PC-3 (cell line): ENCODE measurements at regions of chr2 and their contacts with region 1.

Region 1: DNA sequence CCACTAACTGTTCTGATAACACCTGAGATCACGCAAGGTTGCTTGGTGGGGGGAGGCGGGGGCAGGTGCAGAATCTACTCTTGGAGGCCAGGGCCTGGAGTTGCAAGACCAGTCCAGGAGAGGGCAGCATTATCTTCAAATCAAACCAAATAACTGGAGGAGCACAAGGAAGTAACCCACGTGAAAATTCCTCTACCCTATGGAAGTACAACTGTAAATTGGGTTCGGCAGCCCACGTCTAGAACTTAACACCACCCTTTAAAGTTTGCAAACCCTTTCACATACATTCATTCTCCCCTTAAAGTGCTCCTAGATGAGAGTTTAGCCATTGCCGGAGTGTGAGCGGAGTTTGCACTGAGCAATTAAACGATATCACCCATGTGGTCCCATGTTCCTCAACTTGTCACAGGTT is 19.6 kb upstream of the CXCR1 start:
- DNase-seq: peak; percentile 81
- ATAC-seq: peak; percentile 97
- H3K4me3 ChIP-seq: no peak overlapping the region; the same call in 1 of the 2 replicates
- H3K27ac ChIP-seq: no peak overlapping the region
- H3K4me1 ChIP-seq: 0 out of 2 replicates have a peak, but pooled peaks cover 4% of the 10 kb centered on the region
- H3K27me3 ChIP-seq: peaks cover 8% of the 10 kb centered on the region
- CTCF ChIP-seq: peak; percentile 87

Region 2: GRCh38 chr2:218216674-218217359 is 30.5 kb after region 1 on chr2 and contains the start of gene ARPC2:
- CTCF ChIA-PET with region 1: no interaction called
- POLR2A ChIA-PET with region 1: no interaction called
- intact Hi-C with region 1: loop called (anchors 1 kb)
- DNase-seq: peak; percentile 95
- ATAC-seq: peak; percentile 81
- H3K4me3 ChIP-seq: peak within 1 kb of the TSS; percentile 100
- H3K27ac ChIP-seq: peak within 1 kb of the TSS; percentile 43
- H3K4me1 ChIP-seq: peaks cover 26% of the 10 kb centered on the region
- H3K27me3 ChIP-seq: no peaks in the 10 kb centered on the region
- CTCF ChIP-seq: no peak
- total RNA-seq, gene ARPC2: 210 and 213 TPM in 2 replicates

Region 3: DNA sequence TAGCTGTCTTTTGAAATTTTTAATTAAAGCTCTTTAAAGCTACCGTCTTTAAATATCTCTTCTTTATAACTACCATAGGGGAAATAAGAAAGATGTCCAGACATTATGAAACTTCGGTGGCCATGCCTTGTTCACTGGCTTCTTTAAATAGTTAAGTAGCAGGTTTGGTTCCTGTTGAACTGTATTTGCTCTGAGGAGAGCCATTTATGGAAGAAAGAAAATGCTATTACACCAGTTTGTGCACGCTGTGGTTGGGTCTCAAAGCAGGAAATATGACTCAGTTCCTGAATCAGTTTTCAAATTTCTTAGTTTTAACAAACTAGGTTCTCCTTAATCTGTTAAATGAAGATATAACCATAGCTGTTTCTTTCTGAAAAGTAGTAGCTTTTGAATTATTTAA is 42.9 kb after region 1 on chr2:
- CTCF ChIA-PET with region 1: no interaction called
- POLR2A ChIA-PET with region 1: no interaction called
- intact Hi-C with region 1: loop called (anchors 2 kb)
- DNase-seq: peak; percentile 84
- ATAC-seq: peak; percentile 97
- H3K4me3 ChIP-seq: peak overlapping the region; percentile 12; the same call in 1 of the 2 replicates
- H3K27ac ChIP-seq: peak overlapping the region; percentile 70
- H3K4me1 ChIP-seq: peaks cover 28% of the 10 kb centered on the region
- H3K27me3 ChIP-seq: no peaks in the 10 kb centered on the region
- CTCF ChIP-seq: no peak

Region 4: GRCh38 chr2:218257390-218257981 is 71.1 kb after region 1 on chr2:
- CTCF ChIA-PET with region 1: interaction called, 5 read pairs
- POLR2A ChIA-PET with region 1: no interaction called
- intact Hi-C with region 1: loop called (anchors 1 kb)
- DNase-seq: peak; percentile 45
- ATAC-seq: no peak
- H3K4me3 ChIP-seq: no peak overlapping the region
- H3K27ac ChIP-seq: no peak overlapping the region
- H3K4me1 ChIP-seq: no peaks in the 10 kb centered on the region
- H3K27me3 ChIP-seq: no peaks in the 10 kb centered on the region
- CTCF ChIP-seq: peak; percentile 69

Region 5: GRCh38 chr2:218269899-218270720 is 83.7 kb after region 1 on chr2 and contains the starts of genes AAMP and PNKD:
- CTCF ChIA-PET with region 1: no interaction called
- POLR2A ChIA-PET with region 1: no interaction called
- intact Hi-C with region 1: loop called (anchors 2 kb)
- DNase-seq: peak; percentile 99
- ATAC-seq: peak; percentile 87
- H3K4me3 ChIP-seq: peak within 1 kb of the TSS; percentile 90
- H3K27ac ChIP-seq: 0 out of 2 replicates have a peak within 1 kb of the TSS, but pooled peaks have one; percentile 2
- H3K4me1 ChIP-seq: peaks cover 19% of the 10 kb centered on the region
- H3K27me3 ChIP-seq: no peaks in the 10 kb centered on the region
- CTCF ChIP-seq: 0 out of 2 replicates have a peak, but pooled peaks have one; percentile 12
- total RNA-seq, gene AAMP: 272 and 312 TPM in 2 replicates
- total RNA-seq, gene PNKD: 95.5 and 97.7 TPM in 2 replicates

Region 6: DNA sequence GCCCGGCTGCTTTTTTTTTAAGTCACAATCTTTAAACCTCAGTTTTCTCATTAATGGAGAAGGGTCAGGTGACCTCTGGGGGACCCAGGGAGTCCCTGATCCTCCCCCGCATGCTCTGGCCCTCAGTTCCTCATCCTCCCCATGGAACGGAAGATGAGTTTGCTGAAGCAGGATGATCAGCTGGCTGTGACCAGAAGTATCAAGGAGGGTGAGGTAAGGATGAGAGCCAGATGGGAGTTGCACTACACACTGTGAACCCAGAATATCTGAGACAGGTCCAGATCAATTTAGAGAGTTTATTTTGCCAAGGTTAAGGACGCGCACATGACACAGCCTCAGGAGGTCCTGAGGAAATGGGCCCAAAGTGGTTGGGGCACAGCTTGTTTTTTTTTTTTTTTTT is 174.1 kb after region 1 on chr2:
- CTCF ChIA-PET with region 1: no interaction called
- POLR2A ChIA-PET with region 1: no interaction called
- intact Hi-C with region 1: loop called (anchors 10 kb)
- DNase-seq: no peak
- ATAC-seq: no peak
- H3K4me3 ChIP-seq: no peak overlapping the region
- H3K27ac ChIP-seq: no peak overlapping the region
- H3K4me1 ChIP-seq: no peaks in the 10 kb centered on the region
- H3K27me3 ChIP-seq: no peaks in the 10 kb centered on the region
- CTCF ChIP-seq: no peak

Region 7: DNA sequence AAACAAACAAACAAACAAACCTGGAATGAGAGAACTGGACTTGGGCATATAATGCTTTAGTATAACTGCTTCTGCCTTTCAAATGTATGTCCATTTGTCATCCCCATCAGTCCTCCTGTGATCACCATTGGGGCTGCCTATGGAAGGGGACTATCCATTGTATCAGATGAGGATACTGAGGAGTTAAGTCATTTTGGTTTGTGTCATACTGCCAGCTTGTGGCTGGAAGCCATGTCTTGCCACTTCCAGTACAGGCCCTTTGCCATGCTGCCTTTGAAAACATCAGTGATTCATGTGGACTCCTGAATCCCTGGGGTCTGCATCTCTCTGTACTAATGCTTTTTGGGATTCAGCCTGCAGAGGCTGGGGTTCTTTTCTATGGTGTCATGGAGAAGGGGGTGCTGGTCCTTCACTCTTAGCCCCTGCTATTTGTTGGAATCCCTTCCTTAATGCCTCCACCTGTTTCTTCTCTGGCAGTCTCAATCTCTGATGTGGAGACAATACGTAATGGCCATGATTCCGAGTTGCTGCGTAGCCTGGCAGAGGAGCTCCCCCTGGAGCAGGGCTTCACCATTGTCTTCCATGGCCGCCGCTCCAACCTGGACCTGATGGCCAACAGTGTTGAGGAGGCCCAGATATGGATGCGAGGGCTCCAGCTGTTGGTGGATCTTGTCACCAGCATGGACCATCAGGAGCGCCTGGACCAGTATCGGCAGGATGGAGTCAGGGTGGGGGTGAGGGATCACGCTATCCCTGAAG is 431.9 kb after region 1 on chr2:
- CTCF ChIA-PET with region 1: no interaction called
- POLR2A ChIA-PET with region 1: no interaction called
- intact Hi-C with region 1: no loop called
- DNase-seq: peak; percentile 49
- ATAC-seq: peak; percentile 77
- H3K4me3 ChIP-seq: no peak overlapping the region
- H3K27ac ChIP-seq: no peak overlapping the region
- H3K4me1 ChIP-seq: no peaks in the 10 kb centered on the region
- H3K27me3 ChIP-seq: no peaks in the 10 kb centered on the region
- CTCF ChIP-seq: peak; percentile 44